ENCODE measurements at regions of chr16 and their contacts with region 1.

Region 1: GRCh38 chr16:27947696-27948095 is 115.8 kb downstream of the GSG1L start:
- DNase-seq: no peak
- H3K4me3 ChIP-seq: no peak overlapping the region
- H3K27ac ChIP-seq: no peak overlapping the region
- H3K4me1 ChIP-seq: no peaks in the 10 kb centered on the region
- H3K27me3 ChIP-seq: peaks cover 40% of the 10 kb centered on the region
- CTCF ChIP-seq: no peak

Region 2: DNA sequence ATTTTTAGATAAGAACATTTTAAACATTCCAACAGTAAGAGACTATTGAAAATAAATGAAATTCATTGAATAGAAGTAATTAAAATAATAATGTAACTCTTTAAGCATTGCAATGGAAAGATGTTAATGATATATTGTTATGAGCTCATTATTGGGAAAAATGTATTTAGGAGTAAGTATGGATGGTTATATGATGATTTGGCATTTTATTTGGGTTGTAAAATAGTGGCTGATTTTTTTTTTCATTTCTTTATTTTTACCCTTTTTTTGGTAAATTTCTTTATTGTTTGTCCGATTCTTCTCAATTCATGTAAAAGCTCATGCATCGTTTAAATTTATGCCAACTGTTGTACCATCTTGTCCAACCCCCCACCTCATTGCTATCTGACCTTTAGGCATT is 1716.0 kb before region 1 on chr16:
- CTCF ChIA-PET with region 1: no interaction called
- POLR2A ChIA-PET with region 1: interaction called, 19 read pairs
- intact Hi-C with region 1: no loop called
- DNase-seq: no peak
- H3K4me3 ChIP-seq: no peak overlapping the region
- H3K27ac ChIP-seq: no peak overlapping the region
- H3K4me1 ChIP-seq: no peaks in the 10 kb centered on the region
- H3K27me3 ChIP-seq: no peaks in the 10 kb centered on the region
- CTCF ChIP-seq: no peak

Region 3: GRCh38 chr16:27355610-27356009 is 592.1 kb before region 1 on chr16:
- CTCF ChIA-PET with region 1: no interaction called
- POLR2A ChIA-PET with region 1: no interaction called
- intact Hi-C with region 1: no loop called
- DNase-seq: peak; percentile 71
- H3K4me3 ChIP-seq: no peak overlapping the region
- H3K27ac ChIP-seq: no peak overlapping the region
- H3K4me1 ChIP-seq: no peaks in the 10 kb centered on the region
- H3K27me3 ChIP-seq: no peaks in the 10 kb centered on the region
- CTCF ChIP-seq: peak; percentile 60